ENCODE measurements at regions of chr5 and their contacts with region 1.

Region 1: GRCh38 chr5:10695055-10695649 is 65.9 kb downstream of the DAP start:
- DNase-seq: peak; percentile 74
- H3K4me3 ChIP-seq: no peak overlapping the region
- H3K27ac ChIP-seq: no peak overlapping the region
- H3K4me1 ChIP-seq: peaks cover 53% of the 10 kb centered on the region
- CTCF ChIP-seq: peak; percentile 94

Region 2: GRCh38 chr5:9622971-9623421 is 1072.2 kb before region 1 on chr5:
- CTCF ChIA-PET with region 1: no interaction called
- POLR2A ChIA-PET with region 1: no interaction called
- intact Hi-C with region 1: no loop called
- DNase-seq: no peak
- H3K4me3 ChIP-seq: no peak overlapping the region
- H3K27ac ChIP-seq: no peak overlapping the region
- H3K4me1 ChIP-seq: no peaks in the 10 kb centered on the region
- CTCF ChIP-seq: no peak

Region 3: DNA sequence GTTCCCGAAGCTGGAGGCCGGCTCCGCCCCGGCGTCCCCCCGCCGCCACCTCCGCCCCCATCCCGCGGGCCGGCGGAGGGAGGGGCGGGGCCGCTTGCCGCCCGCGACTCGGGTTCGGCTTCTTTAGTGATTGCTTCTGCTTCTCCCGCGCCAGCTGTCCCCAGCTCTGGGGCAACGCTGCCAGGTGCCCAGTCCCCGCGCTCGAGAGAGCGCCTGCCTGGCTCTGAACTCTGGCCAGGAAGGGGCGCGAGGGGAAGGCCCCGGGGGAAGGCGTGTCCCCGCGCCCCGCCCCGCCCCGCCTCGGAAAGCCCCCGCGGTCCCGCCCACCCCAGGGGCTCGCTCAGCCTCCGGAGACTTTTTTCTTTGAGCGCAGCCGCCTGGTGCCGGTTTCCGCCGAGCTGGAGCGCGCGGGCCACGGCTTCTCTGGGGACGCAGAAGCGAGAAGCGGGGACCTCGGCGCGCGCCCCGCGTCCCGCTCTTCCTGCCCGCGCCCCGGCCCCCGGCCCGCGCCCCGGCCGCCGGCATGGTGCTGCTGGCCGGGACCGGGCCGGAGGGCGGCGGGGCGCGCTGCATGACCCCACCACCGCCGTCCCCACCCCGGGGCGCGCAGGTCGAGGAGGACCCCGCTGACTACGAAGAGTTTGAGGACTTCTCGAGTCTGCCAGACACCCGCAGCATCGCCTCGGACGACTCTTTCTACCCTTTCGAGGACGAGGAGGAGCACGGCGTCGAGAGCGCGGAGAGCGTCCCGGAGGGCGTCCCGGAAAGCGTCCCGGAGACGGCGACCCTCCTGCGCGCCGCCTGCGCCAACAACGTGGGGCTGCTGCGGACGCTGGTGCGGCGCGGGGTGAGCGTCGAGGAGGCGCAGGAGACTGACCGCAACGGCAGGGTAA is 131.0 kb before region 1 on chr5 and contains the start of gene ANKRD33B:
- CTCF ChIA-PET with region 1: no interaction called
- POLR2A ChIA-PET with region 1: no interaction called
- intact Hi-C with region 1: loop called (anchors 5 kb)
- DNase-seq: peak; percentile 91
- H3K4me3 ChIP-seq: peak within 1 kb of the TSS; percentile 78
- H3K27ac ChIP-seq: peak within 1 kb of the TSS; percentile 20
- H3K4me1 ChIP-seq: peaks cover 50% of the 10 kb centered on the region
- CTCF ChIP-seq: no peak
- total RNA-seq, gene ANKRD33B: 5.6 TPM in 2 replicates

Region 4: DNA sequence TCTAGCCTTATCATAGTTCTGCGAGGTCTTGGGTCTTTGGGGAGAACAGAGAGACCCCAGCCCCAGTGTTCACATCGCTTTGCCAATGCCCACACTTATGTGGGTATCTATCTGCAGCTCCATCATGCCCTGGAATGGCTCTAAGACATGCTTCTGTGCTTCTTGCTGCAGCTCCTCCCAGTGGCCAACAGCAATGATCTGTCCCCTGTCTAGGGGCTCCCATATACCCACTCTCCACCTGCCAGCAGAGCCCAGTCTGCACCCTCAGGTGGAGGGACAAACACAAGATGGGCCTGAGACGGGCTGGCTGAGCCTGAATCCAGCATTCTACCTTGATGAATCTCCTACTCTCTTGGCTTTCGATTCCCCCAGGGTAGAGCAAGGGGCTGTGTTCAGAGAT is 80.5 kb after region 1 on chr5:
- CTCF ChIA-PET with region 1: no interaction called
- POLR2A ChIA-PET with region 1: no interaction called
- intact Hi-C with region 1: loop called (anchors 5 kb)
- DNase-seq: peak; percentile 23
- H3K4me3 ChIP-seq: no peak overlapping the region
- H3K27ac ChIP-seq: no peak overlapping the region
- H3K4me1 ChIP-seq: no peaks in the 10 kb centered on the region
- CTCF ChIP-seq: peak; percentile 71

Region 5: GRCh38 chr5:10863763-10864383 is 168.7 kb after region 1 on chr5:
- CTCF ChIA-PET with region 1: no interaction called
- POLR2A ChIA-PET with region 1: no interaction called
- intact Hi-C with region 1: loop called (anchors 5 kb)
- DNase-seq: peak; percentile 59
- H3K4me3 ChIP-seq: no peak overlapping the region
- H3K27ac ChIP-seq: no peak overlapping the region
- H3K4me1 ChIP-seq: no peaks in the 10 kb centered on the region
- CTCF ChIP-seq: peak; percentile 95

Region 6: GRCh38 chr5:10987930-10988504 is 292.9 kb after region 1 on chr5:
- CTCF ChIA-PET with region 1: no interaction called
- POLR2A ChIA-PET with region 1: no interaction called
- intact Hi-C with region 1: loop called (anchors 2 kb)
- DNase-seq: peak; percentile 36
- H3K4me3 ChIP-seq: no peak overlapping the region
- H3K27ac ChIP-seq: no peak overlapping the region
- H3K4me1 ChIP-seq: no peaks in the 10 kb centered on the region
- CTCF ChIP-seq: peak; percentile 86

Region 7: GRCh38 chr5:11182441-11183268 is 487.5 kb after region 1 on chr5:
- CTCF ChIA-PET with region 1: no interaction called
- POLR2A ChIA-PET with region 1: no interaction called
- intact Hi-C with region 1: loop called (anchors 10 kb)
- DNase-seq: peak; percentile 18
- H3K4me3 ChIP-seq: no peak overlapping the region
- H3K27ac ChIP-seq: no peak overlapping the region
- H3K4me1 ChIP-seq: no peaks in the 10 kb centered on the region
- CTCF ChIP-seq: peak; percentile 72

Measured in OCI-LY7 (cell line).